Esophagus muscularis mucosa (tissue), 4 donors: ENCODE measurements at regions of chr19 and their contacts with region 1.

Region 1: GRCh38 chr19:36483653-36484052 is 5.7 kb downstream of the ZNF566 start:
- DNase-seq: no peak
- H3K4me3 ChIP-seq: no peak overlapping the region
- H3K27ac ChIP-seq: no peak overlapping the region
- H3K4me1 ChIP-seq: peaks cover 8 to 16% (median 14%) of the 10 kb centered on the region in 4 donors
- H3K27me3 ChIP-seq: no peaks in the 10 kb centered on the region
- CTCF ChIP-seq: no peak
- EP300 ChIP-seq: no peak
- POLR2A ChIP-seq: no peak

Region 2: DNA sequence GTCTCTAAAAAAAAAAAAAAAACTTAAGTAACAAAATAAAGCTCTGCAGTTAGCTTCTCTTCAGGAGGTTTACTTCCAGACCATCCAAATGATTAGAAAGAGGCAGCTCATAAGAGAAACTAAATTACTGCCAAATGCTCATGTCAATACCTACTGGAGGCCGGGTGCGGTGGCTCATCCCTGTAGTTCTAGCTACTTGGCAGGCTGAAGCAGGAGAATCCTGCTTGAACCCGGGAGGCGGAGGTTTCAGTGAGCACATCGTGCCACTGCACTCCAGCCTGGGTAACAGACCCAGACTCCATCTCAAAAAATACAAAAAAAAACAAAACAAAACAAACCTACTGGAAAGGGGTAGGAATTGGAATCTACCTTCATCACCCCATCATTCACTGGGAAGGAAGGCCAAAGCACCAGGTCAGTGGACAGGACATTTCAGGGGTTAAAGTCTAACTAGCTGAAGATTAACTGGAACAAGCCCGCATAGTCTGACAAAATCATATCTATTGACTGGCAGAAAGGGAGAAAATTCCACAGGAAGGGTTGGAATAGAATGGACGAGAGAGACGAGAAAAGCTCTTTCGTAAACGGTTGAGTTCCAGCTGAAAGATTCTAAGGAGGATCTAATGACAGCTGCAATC is 106.0 kb before region 1 on chr19:
- intact Hi-C with region 1: no loop called
- DNase-seq: no peak
- H3K4me3 ChIP-seq: peak overlapping the region; percentile 72 to 90 (median 74)
- H3K27ac ChIP-seq: peak overlapping the region; percentile 84 to 88 (median 86)
- H3K4me1 ChIP-seq: peaks cover 11 to 27% (median 23%) of the 10 kb centered on the region in 4 donors
- H3K27me3 ChIP-seq: no peaks in the 10 kb centered on the region
- CTCF ChIP-seq: no peak
- EP300 ChIP-seq: no peak
- POLR2A ChIP-seq: no peak

Region 3: GRCh38 chr19:36501973-36502372 is 18.3 kb after region 1 on chr19:
- intact Hi-C with region 1: loop called (anchors 2 kb)
- DNase-seq: no peak
- H3K4me3 ChIP-seq: no peak overlapping the region
- H3K27ac ChIP-seq: no peak overlapping the region
- H3K4me1 ChIP-seq: no peaks in the 10 kb centered on the region
- H3K27me3 ChIP-seq: no peaks in the 10 kb centered on the region
- CTCF ChIP-seq: no peak
- EP300 ChIP-seq: no peak
- POLR2A ChIP-seq: no peak